Common myeloid progenitor, CD34-positive (primary cell): ENCODE measurements at regions of chr14 and their contacts with region 1.

Region 1: GRCh38 chr14:49497725-49498348 is 88.3 kb downstream of the RPS29 start:
- DNase-seq: peak; percentile 81 to 91 (median 88)
- H3K4me3 ChIP-seq: no peak overlapping the region
- H3K27ac ChIP-seq: no peak overlapping the region
- H3K4me1 ChIP-seq: peaks cover 12 to 25% (median 16%) of the 10 kb centered on the region in 4 experiments
- H3K27me3 ChIP-seq: no peaks in the 10 kb centered on the region

Region 2: GRCh38 chr14:49447540-49448107 is 50.2 kb before region 1 on chr14:
- CTCF ChIA-PET with region 1: no interaction called
- POLR2A ChIA-PET with region 1: no interaction called
- DNase-seq: no peak
- H3K4me3 ChIP-seq: no peak overlapping the region
- H3K27ac ChIP-seq: no peak overlapping the region
- H3K4me1 ChIP-seq: no peaks in the 10 kb centered on the region
- H3K27me3 ChIP-seq: no peaks in the 10 kb centered on the region

Region 3: DNA sequence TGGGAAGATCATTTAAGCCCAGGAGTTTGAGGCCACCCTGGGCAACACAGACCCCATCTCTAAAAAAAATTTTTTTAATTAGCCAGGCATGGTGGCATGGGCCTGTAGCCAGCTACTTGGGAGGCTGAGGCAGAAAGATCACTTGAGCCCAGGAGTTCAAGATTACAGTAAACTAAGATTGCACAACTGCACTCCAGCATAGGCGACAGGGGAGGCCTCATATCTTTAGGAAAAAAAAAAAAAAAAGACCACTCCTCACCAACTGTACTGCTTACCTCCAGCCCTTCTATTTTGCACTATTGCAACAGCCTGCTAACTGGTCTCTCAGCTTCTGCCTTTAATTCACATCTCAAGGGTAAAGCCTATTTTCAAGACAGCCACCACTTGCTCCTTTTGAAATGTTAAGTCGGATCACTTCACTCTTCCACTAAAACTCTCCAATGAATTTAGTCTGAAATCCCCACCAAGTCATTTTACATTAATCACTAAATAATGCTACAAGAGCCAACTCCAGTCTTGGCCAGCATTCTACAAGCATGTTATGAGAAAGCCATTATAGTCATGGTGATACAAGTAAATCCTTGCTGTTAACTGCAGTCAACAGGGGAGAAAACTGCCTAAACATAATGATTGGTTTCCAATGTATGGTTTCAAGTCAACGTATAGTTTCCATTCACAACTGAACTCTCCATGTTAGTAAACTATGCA is 17.6 kb before region 1 on chr14:
- CTCF ChIA-PET with region 1: interaction called, 12 read pairs
- POLR2A ChIA-PET with region 1: no interaction called
- DNase-seq: no peak
- H3K4me3 ChIP-seq: no peak overlapping the region
- H3K27ac ChIP-seq: no peak overlapping the region
- H3K4me1 ChIP-seq: peaks cover 8 to 20% (median 14%) of the 10 kb centered on the region in 4 experiments
- H3K27me3 ChIP-seq: no peaks in the 10 kb centered on the region

Region 4: GRCh38 chr14:49485290-49485689 is 12.5 kb before region 1 on chr14:
- CTCF ChIA-PET with region 1: interaction called, 15 read pairs
- POLR2A ChIA-PET with region 1: no interaction called
- DNase-seq: no peak
- H3K4me3 ChIP-seq: no peak overlapping the region
- H3K27ac ChIP-seq: no peak overlapping the region
- H3K4me1 ChIP-seq: peaks cover 7 to 20% (median 15%) of the 10 kb centered on the region in 4 experiments
- H3K27me3 ChIP-seq: no peaks in the 10 kb centered on the region

Region 5: DNA sequence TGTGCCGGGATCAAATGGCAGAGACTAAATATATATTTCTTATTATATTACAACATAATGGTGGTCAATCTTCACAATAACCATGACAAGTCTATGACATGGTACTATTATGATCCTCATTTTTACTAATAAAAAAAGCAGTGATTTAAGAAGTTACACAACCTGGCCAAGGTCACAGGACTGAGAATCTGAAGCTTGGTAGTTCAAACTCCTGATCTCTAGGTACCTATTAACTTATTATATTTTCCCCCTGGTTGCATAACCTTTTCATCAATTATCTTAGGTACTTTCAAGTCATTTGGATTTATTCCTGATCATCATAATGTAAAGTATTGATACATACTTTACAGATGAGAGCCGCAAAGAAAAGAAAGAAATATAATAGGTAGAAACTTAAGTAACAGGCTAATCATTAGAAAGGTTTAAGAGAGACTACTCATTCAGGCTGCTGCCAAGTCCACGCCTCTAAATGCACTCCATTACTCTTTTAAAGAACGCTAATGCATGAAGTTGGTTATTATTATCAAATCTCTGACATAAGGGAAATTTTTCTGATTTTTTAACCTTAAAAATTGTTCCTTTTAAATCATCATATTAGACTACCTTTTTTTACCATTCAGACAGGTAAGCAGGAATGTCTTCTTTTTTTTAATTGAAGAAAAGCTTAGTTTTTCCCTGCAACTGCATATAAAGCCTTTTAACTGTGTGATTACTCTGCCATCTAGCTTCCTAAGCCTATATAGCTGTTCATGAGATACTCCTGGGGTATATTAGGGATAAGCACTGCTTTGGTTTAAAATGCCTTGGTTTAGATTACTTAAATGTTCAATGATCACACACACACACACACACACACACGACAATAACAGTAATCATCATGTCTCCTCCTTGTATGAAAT is 52.7 kb after region 1 on chr14:
- CTCF ChIA-PET with region 1: interaction called, 14 read pairs
- POLR2A ChIA-PET with region 1: no interaction called
- DNase-seq: peak; percentile 22 to 38 (median 31)
- H3K4me3 ChIP-seq: no peak overlapping the region
- H3K27ac ChIP-seq: no peak overlapping the region
- H3K4me1 ChIP-seq: peaks cover 0 to 4% (median under 1%) of the 10 kb centered on the region in 4 experiments
- H3K27me3 ChIP-seq: no peaks in the 10 kb centered on the region